Activated CD8-positive, alpha-beta memory T cell treated with anti-CD3 and anti-CD28 coated beads, Interleukin-2, amount 10 ng/mL, durations not matched to agents 7 days and 5 days (primary cell): ENCODE measurements at regions of chr9 and their contacts with region 1.

Region 1: DNA sequence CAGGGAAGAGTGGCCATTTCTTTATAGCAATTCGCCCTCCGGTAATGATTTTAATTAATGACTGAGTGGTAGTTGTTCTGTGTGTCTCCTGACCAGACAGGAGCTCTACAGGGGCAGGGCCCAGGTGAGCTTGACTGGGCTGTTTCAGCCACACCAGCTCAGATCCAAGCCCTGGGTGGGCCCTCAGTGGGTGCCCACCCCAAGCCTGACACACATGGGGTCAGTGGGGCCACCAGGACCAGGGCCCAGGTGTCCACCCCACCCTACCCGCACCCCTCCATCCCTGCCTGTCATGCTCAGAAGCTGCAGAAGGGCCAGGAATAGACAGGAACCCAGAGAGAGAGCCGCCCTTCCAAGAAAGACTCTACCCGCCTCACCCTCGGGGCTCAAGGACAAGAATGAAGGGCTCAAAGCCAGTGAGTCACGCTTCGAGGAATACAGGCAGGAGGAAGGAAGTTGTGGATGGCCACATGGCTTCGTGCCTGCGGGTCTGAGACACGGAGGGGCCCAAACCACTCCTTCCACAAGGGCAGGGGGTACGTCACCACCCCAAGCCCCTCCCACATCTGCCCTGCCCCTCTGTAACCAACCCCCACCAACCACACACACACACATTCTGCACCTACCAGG is 56.2 kb upstream of the STXBP1 start:
- DNase-seq: peak; percentile 95
- ATAC-seq: peak; percentile 93
- H3K4me3 Mint-ChIP-seq: peak overlapping the region; percentile 56
- H3K27ac Mint-ChIP-seq: peak overlapping the region; percentile 93
- H3K4me1 Mint-ChIP-seq: peaks cover 77% of the 10 kb centered on the region
- H3K27me3 Mint-ChIP-seq: no peaks in the 10 kb centered on the region

Region 2: DNA sequence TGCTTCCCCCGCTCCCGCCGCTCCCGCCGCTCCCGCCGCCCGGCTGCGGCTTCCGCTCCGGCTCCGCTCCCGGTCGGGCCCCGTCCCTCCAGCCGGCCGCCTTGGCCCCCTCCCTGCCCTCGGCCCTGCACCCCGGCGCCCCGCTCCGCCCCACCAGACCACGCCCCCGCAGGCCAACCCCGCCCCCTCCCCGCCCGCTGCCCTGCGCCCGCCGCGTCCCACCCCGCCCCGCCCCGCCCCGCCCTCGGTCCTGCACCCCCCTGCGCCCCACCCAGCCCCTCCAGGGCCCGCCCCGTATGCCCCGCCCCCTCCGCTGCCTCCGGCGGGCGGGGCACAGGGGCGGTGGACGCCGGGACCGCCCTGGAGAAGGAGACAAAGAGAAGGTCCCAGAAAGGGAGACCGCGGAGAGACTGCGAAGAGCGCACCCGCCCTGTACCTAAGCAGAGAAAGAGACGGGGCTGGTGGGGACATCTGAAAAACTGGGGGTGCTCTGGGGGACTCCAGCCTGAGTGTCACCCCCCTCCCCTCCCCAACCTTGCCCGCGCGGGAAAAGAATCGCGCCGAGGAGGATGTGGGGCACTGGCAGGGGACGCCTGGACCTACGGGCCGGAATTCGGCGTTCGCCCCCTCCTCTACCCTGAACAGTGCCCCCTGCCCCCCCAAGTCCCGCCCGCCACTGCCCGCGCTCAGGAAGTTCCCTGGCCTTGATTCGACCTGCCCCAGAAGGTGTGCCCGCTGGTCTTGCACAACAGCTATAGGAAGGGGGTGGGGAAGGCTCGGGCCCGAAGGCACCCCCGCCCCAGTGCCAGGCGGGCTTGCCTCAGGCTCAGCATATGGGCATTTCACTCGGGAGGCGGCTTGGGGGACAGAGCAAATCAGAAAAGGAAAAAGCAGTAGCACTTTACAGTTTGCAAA is 13.3 kb after region 1 on chr9:
- CTCF ChIA-PET with region 1: interaction called, 10 read pairs
- DNase-seq: peak; percentile 88
- ATAC-seq: peak; percentile 85
- H3K4me3 Mint-ChIP-seq: peak overlapping the region; percentile 75
- H3K27ac Mint-ChIP-seq: peak overlapping the region; percentile 95
- H3K4me1 Mint-ChIP-seq: peaks cover 58% of the 10 kb centered on the region
- H3K27me3 Mint-ChIP-seq: no peaks in the 10 kb centered on the region

Region 3: GRCh38 chr9:127578955-127579853 is 23.3 kb after region 1 on chr9:
- CTCF ChIA-PET with region 1: interaction called, 17 read pairs
- DNase-seq: peak; percentile 91
- ATAC-seq: peak; percentile 99
- H3K4me3 Mint-ChIP-seq: peak overlapping the region; percentile 76
- H3K27ac Mint-ChIP-seq: peak overlapping the region; percentile 90
- H3K4me1 Mint-ChIP-seq: peaks cover 54% of the 10 kb centered on the region
- H3K27me3 Mint-ChIP-seq: no peaks in the 10 kb centered on the region